Caco-2 (cell line): ENCODE measurements at regions of chr10 and their contacts with region 1.

Region 1: DNA sequence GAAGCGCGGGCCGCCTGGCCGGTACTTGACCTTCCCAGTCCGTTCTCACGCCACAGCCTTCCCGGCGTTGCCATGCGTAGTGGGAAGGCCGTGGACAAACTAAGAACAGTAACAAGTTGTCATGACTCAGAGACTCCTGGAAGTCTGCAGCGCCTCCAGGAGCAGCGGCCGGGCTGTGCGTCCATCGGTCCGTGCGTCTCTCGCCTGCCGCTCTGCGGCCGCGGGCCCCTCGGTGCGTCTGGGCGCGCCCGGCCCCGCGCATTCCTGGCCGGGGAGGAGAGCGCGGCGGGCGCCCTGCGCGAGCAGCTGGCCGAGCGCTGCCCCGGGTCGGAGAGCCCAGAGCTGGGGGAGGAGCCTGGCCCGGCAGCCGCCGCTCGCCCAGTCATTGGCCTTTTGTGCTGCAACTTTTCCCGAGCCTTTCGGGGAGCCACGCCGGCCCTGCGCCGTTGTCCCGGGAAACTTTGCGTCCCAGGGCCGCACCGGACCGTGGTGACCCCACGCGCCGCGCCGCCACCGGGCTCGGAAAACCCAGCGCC is 123.7 kb downstream of the TACC2 start:
- DNase-seq: peak; percentile 91 to 94
- H3K4me3 ChIP-seq: peak overlapping the region; percentile 94
- H3K4me3 Mint-ChIP-seq: peak overlapping the region; percentile 79
- H3K27ac Mint-ChIP-seq: peak overlapping the region; percentile 61
- H3K4me1 ChIP-seq: peaks cover 16% of the 10 kb centered on the region
- H3K4me1 Mint-ChIP-seq: peaks cover 23% of the 10 kb centered on the region
- H3K27me3 ChIP-seq: no peaks in the 10 kb centered on the region
- H3K27me3 Mint-ChIP-seq: no peaks in the 10 kb centered on the region
- CTCF ChIP-seq: peak in 1 of 2 experiments; percentile 61

Region 2: GRCh38 chr10:121927841-121928527 is 184.7 kb before region 1 on chr10 and contains the start of gene ATE1:
- CTCF ChIA-PET with region 1: interaction called, 4 read pairs
- POLR2A ChIA-PET with region 1: interaction called, 4 read pairs
- intact Hi-C with region 1: loop called (anchors 2 kb)
- DNase-seq: peak; percentile 92 to 94
- H3K4me3 ChIP-seq: peak within 1 kb of the TSS; percentile 96
- H3K4me3 Mint-ChIP-seq: peak within 1 kb of the TSS; percentile 82
- H3K27ac Mint-ChIP-seq: peak within 1 kb of the TSS; percentile 97
- H3K4me1 ChIP-seq: peaks cover 49% of the 10 kb centered on the region
- H3K4me1 Mint-ChIP-seq: peaks cover 35% of the 10 kb centered on the region
- H3K27me3 ChIP-seq: no peaks in the 10 kb centered on the region
- H3K27me3 Mint-ChIP-seq: no peaks in the 10 kb centered on the region
- CTCF ChIP-seq: no peak
- total RNA-seq, gene ATE1: 75.2 and 76.9 TPM in 2 replicates

Region 3: GRCh38 chr10:122019414-122019975 is 93.2 kb before region 1 on chr10:
- CTCF ChIA-PET with region 1: interaction called, 4 read pairs
- POLR2A ChIA-PET with region 1: interaction called, 13 read pairs
- intact Hi-C with region 1: loop called (anchors 1 kb)
- DNase-seq: peak; percentile 85 to 90
- H3K4me3 ChIP-seq: peak overlapping the region; percentile 41
- H3K4me3 Mint-ChIP-seq: peak overlapping the region; percentile 96
- H3K27ac Mint-ChIP-seq: peak overlapping the region; percentile 94
- H3K4me1 ChIP-seq: peaks cover 27% of the 10 kb centered on the region
- H3K4me1 Mint-ChIP-seq: peaks cover 10% of the 10 kb centered on the region
- H3K27me3 ChIP-seq: no peaks in the 10 kb centered on the region
- H3K27me3 Mint-ChIP-seq: no peaks in the 10 kb centered on the region
- CTCF ChIP-seq: no peak

Region 4: GRCh38 chr10:122051251-122051996 is 61.3 kb before region 1 on chr10:
- CTCF ChIA-PET with region 1: interaction called, 7 read pairs
- POLR2A ChIA-PET with region 1: no interaction called
- intact Hi-C with region 1: loop called (anchors 1 kb)
- DNase-seq: peak; percentile 73 to 74
- H3K4me3 ChIP-seq: no peak overlapping the region
- H3K4me3 Mint-ChIP-seq: no peak overlapping the region
- H3K27ac Mint-ChIP-seq: no peak overlapping the region
- H3K4me1 ChIP-seq: peaks cover 25% of the 10 kb centered on the region
- H3K4me1 Mint-ChIP-seq: peaks cover 10% of the 10 kb centered on the region
- H3K27me3 ChIP-seq: no peaks in the 10 kb centered on the region
- H3K27me3 Mint-ChIP-seq: no peaks in the 10 kb centered on the region
- CTCF ChIP-seq: peak; percentile 55 to 76

Region 5: GRCh38 chr10:122072491-122072890 is 40.2 kb before region 1 on chr10:
- CTCF ChIA-PET with region 1: no interaction called
- POLR2A ChIA-PET with region 1: no interaction called
- intact Hi-C with region 1: no loop called
- DNase-seq: no peak
- H3K4me3 ChIP-seq: no peak overlapping the region
- H3K4me3 Mint-ChIP-seq: no peak overlapping the region
- H3K27ac Mint-ChIP-seq: no peak overlapping the region
- H3K4me1 ChIP-seq: no peaks in the 10 kb centered on the region
- H3K4me1 Mint-ChIP-seq: no peaks in the 10 kb centered on the region
- H3K27me3 ChIP-seq: no peaks in the 10 kb centered on the region; the same call in 1 of the 2 replicates
- H3K27me3 Mint-ChIP-seq: no peaks in the 10 kb centered on the region
- CTCF ChIP-seq: no peak

Region 6: DNA sequence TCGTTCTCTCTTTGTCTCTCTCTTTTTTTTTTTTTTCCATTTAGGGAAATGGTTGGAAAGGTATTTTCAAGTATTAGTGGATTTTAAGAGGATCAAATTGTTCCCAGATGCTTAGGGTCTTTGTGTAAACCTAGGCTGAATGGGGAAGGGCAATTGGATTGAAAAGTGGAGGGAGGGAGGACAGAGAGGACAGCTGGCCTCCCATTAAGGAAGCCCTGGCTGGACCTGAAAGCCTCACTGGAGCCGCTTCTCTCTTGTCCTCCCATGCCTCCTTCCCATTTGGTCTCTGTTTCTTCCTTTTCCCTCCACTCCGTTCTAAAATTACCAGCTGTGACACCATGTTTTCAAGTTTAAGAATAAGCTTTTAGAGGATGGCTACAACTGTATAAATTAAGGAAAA is 19.6 kb before region 1 on chr10:
- CTCF ChIA-PET with region 1: no interaction called
- POLR2A ChIA-PET with region 1: no interaction called
- intact Hi-C with region 1: no loop called
- DNase-seq: no peak
- H3K4me3 ChIP-seq: no peak overlapping the region
- H3K4me3 Mint-ChIP-seq: no peak overlapping the region
- H3K27ac Mint-ChIP-seq: no peak overlapping the region
- H3K4me1 ChIP-seq: no peaks in the 10 kb centered on the region
- H3K4me1 Mint-ChIP-seq: no peaks in the 10 kb centered on the region
- H3K27me3 ChIP-seq: no peaks in the 10 kb centered on the region
- H3K27me3 Mint-ChIP-seq: no peaks in the 10 kb centered on the region
- CTCF ChIP-seq: no peak

Region 7: DNA sequence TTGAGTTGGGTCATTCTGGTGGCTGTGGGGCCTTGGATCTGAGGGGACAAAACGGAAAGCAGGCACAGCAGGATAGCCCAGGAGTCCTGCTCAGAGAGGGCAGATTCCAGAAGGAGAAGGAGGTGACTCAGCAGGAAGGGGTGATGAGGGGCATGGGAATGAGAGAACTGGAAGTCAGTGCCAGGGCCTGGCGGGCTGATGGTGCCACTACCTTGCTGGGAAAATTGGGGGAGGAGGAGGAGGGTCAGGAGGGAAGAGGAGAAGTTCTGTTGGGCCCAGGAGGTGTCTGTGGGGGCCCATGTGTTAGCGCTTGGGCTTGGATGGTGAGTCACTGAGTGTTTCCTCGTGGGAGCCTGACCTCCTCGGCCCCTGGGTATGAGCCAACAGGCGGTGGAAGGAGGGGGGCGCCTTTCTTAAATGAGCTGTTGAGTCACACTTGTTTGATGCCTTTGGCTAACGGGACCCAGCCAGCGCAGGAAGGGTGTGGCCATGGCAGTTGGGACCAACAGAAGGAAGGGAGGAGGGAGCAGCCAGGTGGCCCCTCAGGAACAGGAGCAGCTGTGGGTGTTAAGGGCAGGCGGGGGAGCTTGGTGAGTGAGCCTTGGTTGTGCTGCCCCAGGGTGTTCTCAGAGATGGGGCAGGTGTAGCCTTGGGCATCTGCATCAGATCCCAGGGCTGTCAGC is 28.4 kb after region 1 on chr10:
- CTCF ChIA-PET with region 1: interaction called, 3 read pairs
- POLR2A ChIA-PET with region 1: no interaction called
- intact Hi-C with region 1: loop called (anchors 1 kb)
- DNase-seq: peak; percentile 27 to 47
- H3K4me3 ChIP-seq: no peak overlapping the region
- H3K4me3 Mint-ChIP-seq: no peak overlapping the region
- H3K27ac Mint-ChIP-seq: peak overlapping the region; percentile 59
- H3K4me1 ChIP-seq: no peaks in the 10 kb centered on the region; the same call in 1 of the 2 replicates
- H3K4me1 Mint-ChIP-seq: peaks cover 17% of the 10 kb centered on the region
- H3K27me3 ChIP-seq: no peaks in the 10 kb centered on the region
- H3K27me3 Mint-ChIP-seq: no peaks in the 10 kb centered on the region
- CTCF ChIP-seq: no peak